Testis (tissue), 5 donors: ENCODE measurements at regions of chr18 and their contacts with region 1.

Region 1: GRCh38 chr18:63422087-63422809 is at the start of gene VPS4B:
- DNase-seq: peak; percentile 100
- H3K4me3 ChIP-seq: peak within 1 kb of the TSS; percentile 87 to 97
- H3K27ac ChIP-seq: peak within 1 kb of the TSS; percentile 96 to 99
- H3K4me1 ChIP-seq: peaks cover 5% of the 10 kb centered on the region
- H3K27me3 ChIP-seq: no peaks in the 10 kb centered on the region
- CTCF ChIP-seq: peak in 1 of 3 experiments; percentile 47
- POLR2A ChIP-seq: no peak
- total RNA-seq, gene VPS4B: 25.6 to 30.9 TPM

Region 2: DNA sequence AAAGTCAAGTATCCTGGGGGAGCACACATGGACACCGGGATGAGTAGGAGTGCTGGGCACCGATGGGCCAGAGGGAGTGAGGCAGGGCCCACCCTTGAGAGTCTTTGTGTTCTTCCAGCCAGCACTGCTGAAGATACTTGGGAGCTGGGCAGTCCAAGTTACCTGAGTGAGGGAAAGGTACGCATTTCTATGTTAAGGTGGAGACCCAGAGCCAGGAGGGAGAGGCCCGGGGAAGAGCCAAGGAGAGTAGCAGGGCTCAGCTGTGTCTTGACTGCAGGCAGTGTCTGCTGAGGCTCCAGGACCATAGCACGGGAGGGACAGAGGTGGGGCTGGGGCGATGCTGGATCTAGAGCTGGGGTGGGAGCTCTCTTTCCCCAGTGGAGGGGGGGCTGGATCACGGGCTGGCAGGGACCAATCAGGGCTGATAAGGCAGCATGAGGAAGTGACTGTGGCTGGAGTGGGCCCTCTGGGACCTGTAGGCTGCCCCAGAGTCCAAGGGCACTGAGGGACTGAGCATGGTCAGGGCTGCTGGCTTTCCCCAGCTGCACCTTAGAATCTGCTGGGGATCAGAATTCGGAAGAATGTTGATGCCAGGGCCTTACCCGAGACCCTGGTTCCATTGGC is 417.7 kb before region 1 on chr18:
- intact Hi-C with region 1: loop called (anchors 10 kb)
- DNase-seq: peak; percentile 6
- H3K4me3 ChIP-seq: no peak overlapping the region
- H3K27ac ChIP-seq: no peak overlapping the region
- H3K4me1 ChIP-seq: peaks cover 6% of the 10 kb centered on the region
- H3K27me3 ChIP-seq: no peaks in the 10 kb centered on the region
- CTCF ChIP-seq: no peak
- POLR2A ChIP-seq: no peak

Region 3: GRCh38 chr18:63043516-63043915 is 378.7 kb before region 1 on chr18:
- intact Hi-C with region 1: no loop called
- DNase-seq: no peak
- H3K4me3 ChIP-seq: no peak overlapping the region
- H3K27ac ChIP-seq: no peak overlapping the region
- H3K4me1 ChIP-seq: no peaks in the 10 kb centered on the region
- H3K27me3 ChIP-seq: no peaks in the 10 kb centered on the region
- CTCF ChIP-seq: no peak
- POLR2A ChIP-seq: no peak

Region 4: DNA sequence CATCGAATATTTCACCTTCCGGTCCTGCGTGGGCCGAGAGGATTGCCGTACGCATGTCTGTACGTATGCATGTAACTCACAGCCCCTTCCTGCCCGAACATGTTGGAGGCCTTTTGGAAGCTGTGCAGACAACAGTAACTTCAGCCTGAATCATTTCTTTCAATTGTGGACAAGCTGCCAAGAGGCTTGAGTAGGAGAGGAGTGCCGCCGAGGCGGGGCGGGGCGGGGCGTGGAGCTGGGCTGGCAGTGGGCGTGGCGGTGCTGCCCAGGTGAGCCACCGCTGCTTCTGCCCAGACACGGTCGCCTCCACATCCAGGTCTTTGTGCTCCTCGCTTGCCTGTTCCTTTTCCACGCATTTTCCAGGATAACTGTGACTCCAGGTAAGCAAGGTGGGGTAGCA is 54.4 kb after region 1 on chr18 and contains the start of gene SERPINB5:
- intact Hi-C with region 1: no loop called
- DNase-seq: no peak
- H3K4me3 ChIP-seq: peak within 1 kb of the TSS in 1 of 2 donors; percentile 18
- H3K27ac ChIP-seq: no peak within 1 kb of the TSS
- H3K4me1 ChIP-seq: no peaks in the 10 kb centered on the region
- H3K27me3 ChIP-seq: no peaks in the 10 kb centered on the region
- CTCF ChIP-seq: no peak
- POLR2A ChIP-seq: no peak
- total RNA-seq, gene SERPINB5: 1.7 to 8.1 TPM

Region 5: DNA sequence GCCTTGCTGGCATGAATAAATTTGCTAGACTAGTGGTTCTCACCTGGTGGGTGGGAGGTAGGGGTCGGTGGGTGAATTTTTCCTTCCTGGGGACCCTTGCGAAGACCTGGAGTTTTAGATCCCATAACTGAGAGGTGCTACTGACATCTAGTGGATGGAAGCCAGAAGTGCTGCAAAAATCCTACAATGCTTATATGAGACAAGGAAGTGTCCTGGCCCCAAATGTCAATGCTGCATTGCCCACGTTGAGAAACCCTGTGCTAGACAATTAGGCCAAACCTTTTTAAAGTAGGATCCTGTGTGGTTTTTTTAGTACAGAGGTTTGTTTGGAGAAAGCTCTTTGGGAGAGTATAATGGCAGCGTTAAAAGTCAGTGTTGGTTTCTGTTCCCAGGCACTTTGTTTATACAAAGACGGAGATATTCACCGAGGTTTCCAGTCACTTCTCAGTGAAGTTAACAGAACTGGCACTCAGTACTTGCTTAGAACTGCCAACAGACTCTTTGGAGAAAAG is 557.2 kb after region 1 on chr18:
- intact Hi-C with region 1: no loop called
- DNase-seq: peak; percentile 75
- H3K4me3 ChIP-seq: no peak overlapping the region
- H3K27ac ChIP-seq: no peak overlapping the region
- H3K4me1 ChIP-seq: no peaks in the 10 kb centered on the region
- H3K27me3 ChIP-seq: no peaks in the 10 kb centered on the region
- CTCF ChIP-seq: peak in 2 of 3 experiments; percentile 63 to 79
- POLR2A ChIP-seq: no peak